HCT116 (cell line): ENCODE measurements at regions of chr5 and their contacts with region 1.

Region 1: GRCh38 chr5:149141224-149141956 is at the start of gene ABLIM3:
- DNase-seq: no peak
- ATAC-seq: peak; percentile 91
- H3K4me3 ChIP-seq: peak within 1 kb of the TSS; percentile 65 to 76
- H3K27ac ChIP-seq: peak within 1 kb of the TSS; percentile 30; the same call in 1 of the 2 replicates
- H3K4me1 ChIP-seq: peaks cover 4 to 25% of the 10 kb centered on the region in 2 experiments; a peak in 2 of 4 replicates
- H3K27me3 ChIP-seq: no peaks in the 10 kb centered on the region
- CTCF ChIP-seq: peak in 2 of 3 experiments; percentile 88 to 89; a peak in 4 of 6 replicates
- POLR2A ChIP-seq: no peak
- RAD21 ChIP-seq: no peak
- total RNA-seq, gene ABLIM3: 14.3 TPM

Region 2: DNA sequence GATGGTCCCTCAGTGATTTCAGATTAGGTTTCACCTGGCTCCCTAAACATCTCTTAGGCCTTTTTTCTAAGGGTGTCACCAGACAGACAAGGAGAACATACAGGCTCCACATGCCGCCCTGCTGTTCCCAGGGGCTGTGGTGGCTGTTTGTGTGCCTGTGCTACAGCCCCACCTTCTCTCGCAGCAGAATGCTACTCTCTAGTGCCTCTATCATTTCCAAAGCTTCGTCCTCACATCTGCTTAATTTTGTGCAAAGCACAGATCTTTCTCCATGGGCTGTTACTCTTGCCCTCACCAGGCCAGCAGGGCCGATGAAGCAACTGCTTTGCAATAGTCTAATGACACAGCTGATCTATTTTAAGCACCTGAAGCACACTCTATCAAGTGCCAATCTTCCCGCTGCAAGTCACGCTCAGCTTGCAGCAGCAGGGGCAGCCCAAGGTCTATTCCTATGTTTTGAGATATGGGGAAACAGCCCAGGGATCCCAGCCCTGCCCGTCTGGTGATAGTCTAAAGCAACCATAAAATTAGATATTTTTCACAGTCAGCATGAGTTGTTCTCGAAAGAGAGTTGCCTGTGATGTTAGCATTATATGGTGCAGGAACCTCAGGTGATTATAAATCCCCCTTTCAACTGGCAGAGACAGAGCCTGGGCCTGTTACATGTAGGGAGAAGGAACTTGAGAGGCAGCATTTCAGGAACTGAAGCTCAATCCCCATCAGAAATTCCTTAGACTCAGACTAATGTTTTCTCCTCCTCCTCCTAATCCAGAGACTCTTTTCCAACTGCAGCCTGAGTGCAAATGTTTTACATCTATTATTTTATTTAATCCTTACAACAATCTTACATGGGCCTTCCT is 12.6 kb after region 1 on chr5:
- CTCF ChIA-PET with region 1: interaction called, 25 read pairs
- POLR2A ChIA-PET with region 1: no interaction called
- RAD21 ChIA-PET with region 1: no interaction called
- intact Hi-C with region 1: no loop called
- DNase-seq: no peak
- ATAC-seq: no peak
- H3K4me3 ChIP-seq: no peak overlapping the region
- H3K27ac ChIP-seq: no peak overlapping the region
- H3K4me1 ChIP-seq: peaks cover 2 to 20% of the 10 kb centered on the region in 2 experiments; a peak in 2 of 4 replicates
- H3K27me3 ChIP-seq: no peaks in the 10 kb centered on the region
- CTCF ChIP-seq: no peak
- POLR2A ChIP-seq: no peak
- RAD21 ChIP-seq: no peak

Region 3: GRCh38 chr5:149228618-149229297 is 87.4 kb after region 1 on chr5:
- CTCF ChIA-PET with region 1: interaction called, 9 read pairs
- POLR2A ChIA-PET with region 1: no interaction called
- RAD21 ChIA-PET with region 1: interaction called, 3 to 4 read pairs
- intact Hi-C with region 1: loop called (anchors 1 kb)
- DNase-seq: peak; percentile 89
- ATAC-seq: peak; percentile 98
- H3K4me3 ChIP-seq: no peak overlapping the region
- H3K27ac ChIP-seq: no peak overlapping the region
- H3K4me1 ChIP-seq: peaks cover 21 to 31% of the 10 kb centered on the region in 2 experiments
- H3K27me3 ChIP-seq: no peaks in the 10 kb centered on the region
- CTCF ChIP-seq: peak; percentile 72 to 97 (median 93)
- POLR2A ChIP-seq: no peak
- RAD21 ChIP-seq: peak; percentile 100